HEK293 (cell line): ENCODE measurements at regions of chr17 and their contacts with region 1.

Region 1: DNA sequence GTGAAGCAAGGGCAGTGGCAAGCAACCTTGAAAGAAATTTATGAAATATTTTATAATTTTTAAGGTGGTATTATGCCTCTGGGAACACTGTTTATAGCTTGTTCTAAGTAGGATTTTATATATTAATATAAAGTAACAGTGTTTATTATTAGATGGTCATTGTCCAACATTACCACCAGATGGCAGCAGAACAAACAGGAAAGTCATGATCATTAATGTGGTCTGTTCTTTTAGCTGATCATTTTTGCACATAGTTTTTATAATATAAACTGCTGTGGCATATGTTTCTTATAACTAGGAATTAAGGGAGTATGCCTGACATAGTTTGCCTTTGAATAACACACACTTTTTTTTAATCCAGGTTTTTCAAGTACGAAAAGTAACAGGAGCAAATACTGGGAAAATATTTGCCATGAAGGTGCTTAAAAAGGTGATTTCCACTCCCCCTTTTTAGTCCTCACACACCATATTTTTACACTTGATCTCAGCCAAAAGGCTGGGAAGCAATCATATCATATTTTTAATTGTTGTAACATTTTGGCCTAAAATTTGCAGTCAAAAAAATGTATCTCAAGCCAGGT is 21.4 kb downstream of the RPS6KB1 start:
- H3K4me3 ChIP-seq: no peak overlapping the region
- H3K27ac ChIP-seq: no peak overlapping the region
- H3K4me1 ChIP-seq: peaks cover 8% of the 10 kb centered on the region; the same call in 1 of the 2 replicates
- CTCF ChIP-seq: no peak

Region 2: DNA sequence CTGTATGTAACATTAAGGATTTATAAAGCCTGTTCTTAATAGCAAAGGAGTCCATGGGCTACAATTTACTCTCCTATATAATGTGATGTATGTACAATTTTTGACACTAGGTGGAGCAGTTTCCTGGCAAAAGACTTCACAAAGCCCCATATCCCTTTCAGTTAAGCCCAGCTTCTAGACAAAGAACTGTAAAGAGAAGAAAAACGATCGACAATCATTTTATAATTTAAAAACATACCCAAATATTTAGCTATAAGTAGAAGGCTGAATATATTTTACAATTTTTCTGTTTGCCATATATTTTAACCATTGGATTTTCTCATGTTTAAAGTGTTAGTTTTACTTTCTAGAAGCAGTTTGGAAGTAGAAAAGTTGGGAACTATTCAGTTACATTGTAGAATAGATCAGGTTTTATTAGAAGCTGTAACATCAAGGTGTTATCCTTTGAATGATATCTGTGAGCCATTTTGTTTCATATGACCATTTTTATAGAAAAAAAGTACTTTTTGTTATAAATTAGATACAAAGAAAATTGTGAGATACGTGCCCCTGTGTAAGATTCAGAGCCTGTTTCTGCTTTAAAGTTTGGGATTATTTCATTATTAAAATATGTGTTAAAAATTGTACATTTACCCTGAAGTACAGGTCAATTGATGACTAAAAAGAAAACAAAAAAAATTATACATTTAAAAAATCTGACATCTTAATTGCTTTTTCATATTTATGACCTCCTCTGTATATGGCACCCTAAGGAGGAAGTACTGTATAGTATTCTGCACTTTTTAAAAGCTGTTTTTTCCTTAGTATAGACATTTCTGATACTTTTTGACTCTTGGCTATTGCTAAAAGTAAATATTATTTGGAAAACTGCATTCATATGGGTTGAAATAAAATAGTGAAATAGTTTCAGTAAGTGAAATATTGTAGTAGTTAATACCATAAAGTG is 160.6 kb before region 1 on chr17:
- CTCF ChIA-PET with region 1: interaction called, 26 read pairs
- POLR2A ChIA-PET with region 1: no interaction called
- H3K4me3 ChIP-seq: no peak overlapping the region
- H3K27ac ChIP-seq: peak overlapping the region; percentile 28; the same call in 1 of the 2 replicates
- H3K4me1 ChIP-seq: peaks cover 19% of the 10 kb centered on the region
- CTCF ChIP-seq: 0 out of 2 replicates have a peak, but pooled peaks have one; percentile 53

Region 3: DNA sequence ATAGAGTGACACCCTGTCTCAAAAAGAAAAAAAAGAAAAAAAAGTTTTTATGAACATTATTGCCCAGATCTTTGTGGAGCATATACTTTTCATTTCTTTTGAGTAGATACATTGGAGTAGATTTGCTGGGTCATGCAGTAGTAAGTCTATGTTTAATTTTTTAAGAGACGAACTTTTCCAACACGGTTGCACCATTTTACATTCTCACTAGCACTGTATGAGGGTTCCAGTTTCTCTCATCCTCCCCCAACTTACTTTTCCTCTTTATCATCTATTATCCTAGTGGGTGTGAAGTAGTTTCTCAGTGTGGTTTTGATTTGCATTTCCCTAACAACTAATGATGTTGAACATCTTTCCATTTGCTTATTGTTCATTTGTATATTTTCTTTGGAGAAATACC is 10.9 kb before region 1 on chr17:
- CTCF ChIA-PET with region 1: interaction called, 42 read pairs
- POLR2A ChIA-PET with region 1: no interaction called
- H3K4me3 ChIP-seq: no peak overlapping the region
- H3K27ac ChIP-seq: no peak overlapping the region
- H3K4me1 ChIP-seq: peaks cover 10% of the 10 kb centered on the region
- CTCF ChIP-seq: no peak

Region 4: DNA sequence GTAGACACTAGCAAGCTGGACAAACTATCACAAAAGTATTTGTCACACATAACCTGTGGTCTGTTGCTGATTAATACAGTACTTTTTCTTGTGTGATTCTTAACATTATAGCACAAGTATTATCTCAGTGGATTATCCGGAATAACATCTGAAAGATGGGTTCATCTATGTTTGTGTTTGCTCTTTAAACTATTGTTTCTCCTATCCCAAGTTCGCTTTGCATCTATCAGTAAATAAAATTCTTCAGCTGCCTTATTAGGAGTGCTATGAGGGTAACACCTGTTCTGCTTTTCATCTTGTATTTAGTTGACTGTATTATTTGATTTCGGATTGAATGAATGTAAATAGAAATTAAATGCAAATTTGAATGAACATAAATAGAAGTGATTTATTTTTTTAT is 35.7 kb after region 1 on chr17:
- CTCF ChIA-PET with region 1: interaction called, 15 read pairs
- POLR2A ChIA-PET with region 1: no interaction called
- H3K4me3 ChIP-seq: no peak overlapping the region
- H3K27ac ChIP-seq: no peak overlapping the region
- H3K4me1 ChIP-seq: no peaks in the 10 kb centered on the region
- CTCF ChIP-seq: no peak

Region 5: GRCh38 chr17:60036796-60037612 is 122.6 kb after region 1 on chr17:
- CTCF ChIA-PET with region 1: interaction called, 28 read pairs
- POLR2A ChIA-PET with region 1: no interaction called
- H3K4me3 ChIP-seq: no peak overlapping the region
- H3K27ac ChIP-seq: no peak overlapping the region
- H3K4me1 ChIP-seq: no peaks in the 10 kb centered on the region
- CTCF ChIP-seq: peak; percentile 87